Activated CD8-positive, alpha-beta T cell treated with anti-CD3 and anti-CD28 coated beads for 36 hours (primary cell): ENCODE measurements at regions of chr1 and their contacts with region 1.

Region 1: DNA sequence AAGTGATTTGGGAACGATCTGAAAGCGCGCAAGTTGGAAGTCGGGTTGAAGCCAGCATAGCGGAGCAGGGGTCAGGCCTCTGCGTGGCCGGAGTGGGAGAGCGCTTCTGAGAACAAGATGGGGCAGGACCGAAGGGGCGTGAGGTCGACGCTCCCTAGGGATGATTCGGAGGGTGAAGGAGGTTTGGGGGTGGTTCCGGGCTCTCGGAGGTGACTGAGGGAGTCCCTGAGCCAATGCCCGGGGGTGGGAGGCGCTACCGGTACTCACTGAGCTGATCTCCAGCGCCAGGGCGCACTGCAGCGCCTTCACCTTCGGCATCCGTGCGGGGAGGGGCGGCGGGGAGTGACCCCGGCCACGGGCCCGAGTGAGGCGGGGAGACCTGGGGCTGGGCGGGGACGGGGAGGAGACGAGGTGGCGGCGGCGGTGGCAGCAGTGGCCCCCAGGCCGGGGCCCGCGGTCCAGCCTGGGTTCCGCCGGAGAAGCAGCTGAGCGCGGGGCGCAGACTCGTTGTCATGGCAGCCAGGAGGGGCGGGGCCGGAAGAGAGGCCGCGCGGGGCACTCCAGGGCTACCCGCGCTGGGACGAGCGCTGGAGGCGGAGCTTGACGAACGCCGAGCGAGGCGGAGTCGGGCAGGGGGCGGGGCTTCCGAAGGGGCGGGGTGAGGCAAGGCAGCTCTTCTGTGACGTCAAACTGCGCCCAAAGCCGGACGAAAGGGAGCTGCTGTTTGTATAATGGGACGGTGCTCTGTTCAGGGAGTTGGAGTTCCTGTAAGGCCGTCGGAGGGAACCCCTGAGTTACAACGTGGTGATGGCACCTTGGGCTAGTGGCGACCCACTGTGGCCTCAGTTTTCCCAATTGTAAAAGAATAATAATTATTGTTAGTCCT is at the start of gene SPATA6:
- DNase-seq: peak; percentile 96
- ATAC-seq: peak; percentile 98
- H3K4me3 Mint-ChIP-seq: peak within 1 kb of the TSS; percentile 79
- H3K27ac Mint-ChIP-seq: peak within 1 kb of the TSS; percentile 55
- H3K4me1 Mint-ChIP-seq: peaks cover 23% of the 10 kb centered on the region
- H3K27me3 Mint-ChIP-seq: peaks cover 17% of the 10 kb centered on the region
- CTCF ChIP-seq: no peak
- total RNA-seq, gene SPATA6: 1.4 to 1.7 TPM

Region 2: GRCh38 chr1:48530727-48531351 is 58.9 kb after region 1 on chr1:
- CTCF ChIA-PET with region 1: no interaction called
- POLR2A ChIA-PET with region 1: no interaction called
- intact Hi-C with region 1: loop called (anchors 10 kb)
- DNase-seq: peak; percentile 76
- ATAC-seq: peak; percentile 72
- H3K4me3 Mint-ChIP-seq: no peak overlapping the region
- H3K27ac Mint-ChIP-seq: no peak overlapping the region
- H3K4me1 Mint-ChIP-seq: no peaks in the 10 kb centered on the region
- H3K27me3 Mint-ChIP-seq: peaks cover 17% of the 10 kb centered on the region
- CTCF ChIP-seq: peak; percentile 83

Region 3: DNA sequence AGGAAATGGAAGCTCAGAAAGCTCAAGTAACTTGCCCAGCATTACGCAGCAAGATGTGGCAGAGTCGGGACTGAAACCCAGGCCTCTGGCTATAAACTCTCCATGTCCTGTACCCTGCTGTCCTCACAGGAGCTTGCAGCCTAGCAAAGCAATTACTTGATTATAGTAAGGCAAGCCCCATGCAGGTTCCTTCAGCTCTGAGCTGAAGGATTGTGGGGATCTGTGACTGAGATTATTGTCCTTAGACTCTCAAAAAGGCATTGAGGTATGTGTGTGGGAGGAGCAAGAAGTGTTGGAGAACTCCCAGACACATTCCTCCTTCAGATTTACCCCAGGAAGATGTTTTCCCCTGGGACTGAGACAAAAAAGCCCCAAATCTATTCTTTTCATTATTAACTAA is 124.1 kb after region 1 on chr1:
- CTCF ChIA-PET with region 1: no interaction called
- POLR2A ChIA-PET with region 1: no interaction called
- intact Hi-C with region 1: no loop called
- DNase-seq: no peak
- ATAC-seq: no peak
- H3K4me3 Mint-ChIP-seq: no peak overlapping the region
- H3K27ac Mint-ChIP-seq: no peak overlapping the region
- H3K4me1 Mint-ChIP-seq: no peaks in the 10 kb centered on the region
- H3K27me3 Mint-ChIP-seq: peaks cover 2% of the 10 kb centered on the region
- CTCF ChIP-seq: no peak

Region 4: GRCh38 chr1:48710318-48710717 is 238.4 kb after region 1 on chr1:
- CTCF ChIA-PET with region 1: no interaction called
- POLR2A ChIA-PET with region 1: no interaction called
- intact Hi-C with region 1: no loop called
- DNase-seq: no peak
- ATAC-seq: no peak
- H3K4me3 Mint-ChIP-seq: no peak overlapping the region
- H3K27ac Mint-ChIP-seq: no peak overlapping the region
- H3K4me1 Mint-ChIP-seq: peaks cover 5% of the 10 kb centered on the region
- H3K27me3 Mint-ChIP-seq: no peaks in the 10 kb centered on the region
- CTCF ChIP-seq: no peak